Caco-2 (cell line): ENCODE measurements at regions of chr14 and their contacts with region 1.

Region 1: GRCh38 chr14:92951912-92952471 is 29.0 kb downstream of the CHGA start:
- DNase-seq: peak; percentile 52 to 79
- H3K4me3 ChIP-seq: no peak overlapping the region
- H3K4me3 Mint-ChIP-seq: no peak overlapping the region
- H3K27ac Mint-ChIP-seq: peak overlapping the region; percentile 11
- H3K4me1 ChIP-seq: no peaks in the 10 kb centered on the region
- H3K4me1 Mint-ChIP-seq: no peaks in the 10 kb centered on the region
- H3K27me3 ChIP-seq: no peaks in the 10 kb centered on the region
- H3K27me3 Mint-ChIP-seq: no peaks in the 10 kb centered on the region
- CTCF ChIP-seq: peak; percentile 85 to 96

Region 2: GRCh38 chr14:92759300-92759678 is 192.7 kb before region 1 on chr14:
- CTCF ChIA-PET with region 1: no interaction called
- POLR2A ChIA-PET with region 1: no interaction called
- intact Hi-C with region 1: no loop called
- DNase-seq: peak; percentile 51 to 72
- H3K4me3 ChIP-seq: no peak overlapping the region
- H3K4me3 Mint-ChIP-seq: no peak overlapping the region
- H3K27ac Mint-ChIP-seq: no peak overlapping the region
- H3K4me1 ChIP-seq: no peaks in the 10 kb centered on the region
- H3K4me1 Mint-ChIP-seq: peaks cover 11% of the 10 kb centered on the region
- H3K27me3 ChIP-seq: no peaks in the 10 kb centered on the region
- H3K27me3 Mint-ChIP-seq: peaks cover 4% of the 10 kb centered on the region
- CTCF ChIP-seq: no peak

Region 3: GRCh38 chr14:93090826-93091555 is 139.0 kb after region 1 on chr14:
- CTCF ChIA-PET with region 1: no interaction called
- POLR2A ChIA-PET with region 1: no interaction called
- intact Hi-C with region 1: loop called (anchors 5 kb)
- DNase-seq: no peak
- H3K4me3 ChIP-seq: no peak overlapping the region
- H3K4me3 Mint-ChIP-seq: no peak overlapping the region
- H3K27ac Mint-ChIP-seq: no peak overlapping the region
- H3K4me1 ChIP-seq: no peaks in the 10 kb centered on the region
- H3K4me1 Mint-ChIP-seq: no peaks in the 10 kb centered on the region
- H3K27me3 ChIP-seq: no peaks in the 10 kb centered on the region
- H3K27me3 Mint-ChIP-seq: no peaks in the 10 kb centered on the region
- CTCF ChIP-seq: no peak

Region 4: DNA sequence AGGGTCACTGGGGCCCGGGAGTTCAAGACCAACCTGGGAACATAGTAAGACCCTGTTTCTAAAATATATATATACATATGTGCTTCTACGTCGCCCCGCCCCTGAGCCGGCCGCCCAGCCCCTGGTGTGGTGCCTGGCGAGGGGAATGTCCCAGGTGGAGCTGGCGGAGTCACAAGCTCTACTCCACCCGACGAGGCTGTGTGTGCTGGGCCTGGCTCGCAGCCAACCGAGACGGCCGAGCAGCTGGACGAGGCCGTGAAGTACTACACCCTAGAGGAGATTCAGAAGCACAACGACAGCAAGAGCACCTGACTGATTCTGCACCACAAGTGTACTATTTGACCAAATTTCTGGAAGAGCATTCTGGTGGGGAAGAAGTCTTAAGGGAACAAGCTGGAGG is 185.9 kb after region 1 on chr14:
- CTCF ChIA-PET with region 1: interaction called, 6 read pairs
- POLR2A ChIA-PET with region 1: no interaction called
- intact Hi-C with region 1: loop called (anchors 1 kb)
- DNase-seq: no peak
- H3K4me3 ChIP-seq: no peak overlapping the region
- H3K4me3 Mint-ChIP-seq: no peak overlapping the region
- H3K27ac Mint-ChIP-seq: no peak overlapping the region
- H3K4me1 ChIP-seq: no peaks in the 10 kb centered on the region
- H3K4me1 Mint-ChIP-seq: peaks cover 6% of the 10 kb centered on the region
- H3K27me3 ChIP-seq: no peaks in the 10 kb centered on the region
- H3K27me3 Mint-ChIP-seq: no peaks in the 10 kb centered on the region
- CTCF ChIP-seq: no peak

Region 5: GRCh38 chr14:93160353-93160801 is 208.4 kb after region 1 on chr14:
- CTCF ChIA-PET with region 1: no interaction called
- POLR2A ChIA-PET with region 1: no interaction called
- intact Hi-C with region 1: loop called (anchors 1 kb)
- DNase-seq: peak in 1 of 2 experiments; percentile 46
- H3K4me3 ChIP-seq: no peak overlapping the region
- H3K4me3 Mint-ChIP-seq: no peak overlapping the region
- H3K27ac Mint-ChIP-seq: no peak overlapping the region
- H3K4me1 ChIP-seq: no peaks in the 10 kb centered on the region
- H3K4me1 Mint-ChIP-seq: peaks cover 5% of the 10 kb centered on the region
- H3K27me3 ChIP-seq: no peaks in the 10 kb centered on the region
- H3K27me3 Mint-ChIP-seq: no peaks in the 10 kb centered on the region
- CTCF ChIP-seq: peak; percentile 50 to 65

Region 6: DNA sequence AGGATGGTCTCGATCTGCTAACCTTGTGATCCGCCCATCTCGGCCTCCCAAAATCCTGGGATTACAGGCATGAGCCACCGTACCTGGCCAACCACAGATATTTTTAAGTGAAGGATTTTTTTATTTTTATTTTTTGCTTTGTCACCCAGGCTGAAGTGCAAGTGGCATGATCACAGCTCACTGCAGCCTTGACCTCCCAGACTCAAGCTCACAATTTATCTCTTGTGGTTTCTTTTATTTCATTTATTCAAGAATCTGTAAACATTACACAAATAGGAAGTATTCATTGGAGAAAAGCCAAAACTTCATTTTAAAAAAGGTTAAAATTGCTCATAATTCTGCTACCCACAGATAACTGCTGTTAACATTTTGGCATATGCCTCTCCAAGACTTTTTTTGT is 219.4 kb after region 1 on chr14:
- CTCF ChIA-PET with region 1: no interaction called
- POLR2A ChIA-PET with region 1: no interaction called
- intact Hi-C with region 1: no loop called
- DNase-seq: no peak
- H3K4me3 ChIP-seq: no peak overlapping the region
- H3K4me3 Mint-ChIP-seq: no peak overlapping the region
- H3K27ac Mint-ChIP-seq: no peak overlapping the region
- H3K4me1 ChIP-seq: no peaks in the 10 kb centered on the region
- H3K4me1 Mint-ChIP-seq: no peaks in the 10 kb centered on the region
- H3K27me3 ChIP-seq: no peaks in the 10 kb centered on the region
- H3K27me3 Mint-ChIP-seq: no peaks in the 10 kb centered on the region
- CTCF ChIP-seq: no peak

Region 7: DNA sequence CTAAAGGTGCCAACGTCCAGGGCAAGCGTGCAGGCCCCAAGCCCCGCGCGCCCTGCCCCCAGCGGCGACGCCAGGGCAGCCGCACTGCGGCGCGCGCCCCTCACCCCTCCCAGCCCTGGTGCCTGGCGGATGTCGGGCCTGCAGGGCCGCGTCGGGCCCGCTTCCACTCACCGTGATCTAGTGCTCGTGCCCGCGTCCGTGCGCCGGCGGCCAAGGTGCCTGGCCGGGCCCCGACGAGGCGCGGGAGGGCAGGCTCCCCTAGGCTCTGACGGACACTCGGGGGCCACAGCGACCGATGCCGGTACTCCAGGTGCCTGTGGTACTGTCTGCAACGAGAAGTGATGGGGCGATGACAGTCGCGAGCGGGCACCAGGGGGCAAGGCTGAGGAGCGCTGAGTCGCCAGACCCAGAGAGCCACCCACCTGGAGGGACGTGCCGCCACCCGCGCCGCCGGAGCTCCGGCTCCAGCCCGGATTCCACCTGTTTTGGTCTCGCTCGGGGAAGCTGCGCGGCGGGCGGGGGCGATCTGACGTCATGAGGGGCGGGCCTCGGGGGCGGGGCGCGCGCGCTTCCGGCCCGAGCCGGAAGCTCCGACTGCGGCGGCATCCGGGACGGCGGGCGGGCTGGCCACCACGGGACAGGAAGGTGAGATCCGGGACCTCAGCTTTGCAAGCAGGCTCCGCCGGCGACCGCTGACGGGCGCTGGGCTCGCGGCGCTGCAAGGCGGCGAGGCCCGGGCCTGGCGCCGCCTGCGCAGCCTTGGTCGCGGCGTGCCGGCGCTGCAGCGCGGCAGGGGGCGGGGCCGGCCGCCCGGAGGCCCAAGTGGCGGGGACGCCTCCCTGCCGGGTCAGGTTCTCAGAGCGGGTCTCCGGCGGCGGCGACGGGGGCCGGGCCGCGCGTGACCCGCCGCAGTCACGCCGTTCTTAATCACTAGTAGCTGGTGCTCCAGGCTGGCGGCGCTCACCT is 232.7 kb after region 1 on chr14 and contains the starts of genes LYSET and MOAP1:
- CTCF ChIA-PET with region 1: no interaction called
- POLR2A ChIA-PET with region 1: no interaction called
- intact Hi-C with region 1: loop called (anchors 2 kb)
- DNase-seq: peak; percentile 88 to 91
- H3K4me3 ChIP-seq: peak within 1 kb of the TSS; percentile 100
- H3K4me3 Mint-ChIP-seq: peak within 1 kb of the TSS; percentile 86
- H3K27ac Mint-ChIP-seq: peak within 1 kb of the TSS; percentile 8
- H3K4me1 ChIP-seq: no peaks in the 10 kb centered on the region; the same call in 1 of the 2 replicates
- H3K4me1 Mint-ChIP-seq: no peaks in the 10 kb centered on the region
- H3K27me3 ChIP-seq: no peaks in the 10 kb centered on the region
- H3K27me3 Mint-ChIP-seq: no peaks in the 10 kb centered on the region
- CTCF ChIP-seq: peak; percentile 6 to 22
- total RNA-seq, gene LYSET: 17.3 and 17.4 TPM in 2 replicates
- total RNA-seq, gene MOAP1: 11.5 and 12.2 TPM in 2 replicates

Region 8: GRCh38 chr14:93337143-93337753 is 385.3 kb after region 1 on chr14:
- CTCF ChIA-PET with region 1: no interaction called
- POLR2A ChIA-PET with region 1: no interaction called
- intact Hi-C with region 1: no loop called
- DNase-seq: no peak
- H3K4me3 ChIP-seq: no peak overlapping the region
- H3K4me3 Mint-ChIP-seq: no peak overlapping the region
- H3K27ac Mint-ChIP-seq: no peak overlapping the region
- H3K4me1 ChIP-seq: peaks cover 7% of the 10 kb centered on the region; the same call in 1 of the 2 replicates
- H3K4me1 Mint-ChIP-seq: peaks cover 6% of the 10 kb centered on the region
- H3K27me3 ChIP-seq: no peaks in the 10 kb centered on the region
- H3K27me3 Mint-ChIP-seq: no peaks in the 10 kb centered on the region
- CTCF ChIP-seq: no peak

Region 9: GRCh38 chr14:93619176-93619793 is 667.3 kb after region 1 on chr14:
- CTCF ChIA-PET with region 1: no interaction called
- POLR2A ChIA-PET with region 1: no interaction called
- intact Hi-C with region 1: no loop called
- DNase-seq: peak; percentile 37 to 45
- H3K4me3 ChIP-seq: no peak overlapping the region
- H3K4me3 Mint-ChIP-seq: no peak overlapping the region
- H3K27ac Mint-ChIP-seq: no peak overlapping the region
- H3K4me1 ChIP-seq: no peaks in the 10 kb centered on the region
- H3K4me1 Mint-ChIP-seq: no peaks in the 10 kb centered on the region
- H3K27me3 ChIP-seq: 0 out of 2 replicates have a peak, but pooled peaks cover 1% of the 10 kb centered on the region
- H3K27me3 Mint-ChIP-seq: peaks cover 9% of the 10 kb centered on the region
- CTCF ChIP-seq: peak; percentile 40 to 66